Cardiac septum (tissue), 1 donor: ENCODE measurements at regions of chr6 and their contacts with region 1.

Region 1: GRCh38 chr6:153231048-153231646 is 100.1 kb upstream of the RGS17 start:
- DNase-seq: no peak

Region 2: DNA sequence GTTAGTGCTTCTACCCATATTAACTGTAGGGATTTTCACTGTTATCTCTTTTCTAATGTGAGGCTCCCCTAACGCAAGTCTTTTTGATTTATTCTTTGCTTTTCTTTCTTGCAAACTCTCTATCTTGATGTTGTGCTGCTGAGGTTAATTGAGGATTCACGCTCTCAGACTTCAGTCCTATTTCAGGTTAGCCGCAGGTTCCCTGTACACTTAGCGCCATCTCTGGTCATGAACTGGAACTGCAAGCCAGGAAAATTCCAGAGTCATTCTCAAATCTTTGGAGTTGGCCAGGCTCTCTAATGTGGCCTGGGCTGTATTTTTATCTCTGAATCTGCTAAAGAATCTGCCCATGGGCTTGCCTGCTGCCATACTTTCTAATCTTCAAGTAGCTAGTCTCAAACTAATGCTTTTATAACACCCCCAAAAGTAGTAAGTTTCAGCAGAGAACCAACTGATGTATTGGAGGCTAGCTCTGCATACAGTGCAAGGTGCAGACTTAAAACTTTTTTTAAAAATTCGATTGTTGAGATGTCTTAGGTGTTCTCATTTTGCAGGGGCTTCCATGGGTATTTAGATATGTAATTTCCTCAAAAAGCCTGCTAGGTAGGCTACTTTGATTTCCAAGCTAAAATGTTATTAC is 716.8 kb after region 1 on chr6:
- intact Hi-C with region 1: loop called (anchors 5 kb)
- DNase-seq: no peak